ENCODE measurements at regions of chr19 and their contacts with region 1.

Region 1: DNA sequence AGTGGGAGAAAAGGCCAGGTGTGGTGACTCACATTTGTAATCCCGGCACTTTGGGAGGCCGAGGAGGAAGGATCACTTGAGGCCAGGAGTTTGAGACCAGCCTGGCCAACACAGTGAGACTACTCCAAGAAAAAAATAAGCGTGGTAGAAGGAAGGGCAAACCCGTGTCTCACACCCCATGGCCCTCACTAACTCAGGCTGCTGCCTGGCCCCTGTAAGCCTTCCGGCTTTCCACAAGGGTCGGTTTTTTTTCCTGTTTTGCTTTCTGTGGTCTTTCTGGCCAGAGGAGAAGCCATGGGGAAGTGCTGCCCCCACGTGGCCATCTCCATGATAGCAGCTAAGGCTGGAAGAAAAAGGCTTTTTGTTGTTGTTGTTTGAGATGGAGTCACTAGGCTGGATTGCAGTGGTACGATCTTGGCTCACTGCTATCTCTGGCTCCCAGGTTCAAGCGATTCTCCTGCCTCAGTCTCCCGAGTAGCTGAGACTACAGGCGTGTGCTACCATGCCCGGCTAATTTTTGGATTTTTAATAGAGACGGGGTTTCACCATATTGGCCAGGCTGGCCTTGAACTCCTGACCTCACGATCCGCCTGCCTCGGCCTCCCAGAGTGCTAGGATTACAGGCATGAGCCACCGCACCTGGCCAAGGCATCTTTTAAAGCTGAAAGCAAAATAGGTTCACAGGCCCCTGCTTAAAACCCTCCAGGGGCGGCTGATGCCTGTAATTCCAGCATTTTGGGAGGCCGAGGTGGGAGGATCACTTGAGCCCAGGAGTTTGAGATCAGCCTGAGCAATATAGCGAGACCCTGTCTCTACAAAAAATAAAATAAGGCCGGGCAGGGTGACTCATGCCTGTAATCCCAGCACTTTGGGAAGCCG is 7.5 kb upstream of the ARHGEF18 start:
- DNase-seq: peak; percentile 51
- H3K4me3 ChIP-seq: no peak overlapping the region
- H3K27ac ChIP-seq: no peak overlapping the region
- H3K27me3 ChIP-seq: no peaks in the 10 kb centered on the region
- CTCF ChIP-seq: peak; percentile 91

Region 2: GRCh38 chr19:7104747-7105447 is 236.3 kb before region 1 on chr19:
- CTCF ChIA-PET with region 1: interaction called, 57 read pairs
- POLR2A ChIA-PET with region 1: no interaction called
- DNase-seq: no peak
- H3K4me3 ChIP-seq: no peak overlapping the region
- H3K27ac ChIP-seq: no peak overlapping the region
- H3K27me3 ChIP-seq: no peaks in the 10 kb centered on the region
- CTCF ChIP-seq: no peak

Region 3: GRCh38 chr19:7145494-7146485 is 195.4 kb before region 1 on chr19:
- CTCF ChIA-PET with region 1: interaction called, 29 read pairs
- POLR2A ChIA-PET with region 1: no interaction called
- DNase-seq: no peak
- H3K4me3 ChIP-seq: no peak overlapping the region
- H3K27ac ChIP-seq: no peak overlapping the region
- H3K27me3 ChIP-seq: no peaks in the 10 kb centered on the region
- CTCF ChIP-seq: no peak

Measured in AG04450 (cell line).